HEK293T (cell line): ENCODE measurements at regions of chr7 and their contacts with region 1.

Region 1: GRCh38 chr7:114414156-114415063 is at the start of gene FOXP2:
- DNase-seq: no peak

Region 2: GRCh38 chr7:114085592-114086501 is 328.6 kb before region 1 on chr7:
- CTCF ChIA-PET with region 1: interaction called, 3 read pairs
- POLR2A ChIA-PET with region 1: interaction called, 31 read pairs
- DNase-seq: peak; percentile 69

Region 3: GRCh38 chr7:114450431-114450830 is 36.0 kb after region 1 on chr7:
- CTCF ChIA-PET with region 1: no interaction called
- POLR2A ChIA-PET with region 1: no interaction called
- DNase-seq: no peak

Region 4: GRCh38 chr7:114606100-114606499 is 191.7 kb after region 1 on chr7:
- CTCF ChIA-PET with region 1: no interaction called
- POLR2A ChIA-PET with region 1: no interaction called
- DNase-seq: no peak